Activated T-helper 1 cell treated with anti-CD3 and anti-CD28 coated beads, Interleukin-12 subunit alpha, Interleukin-12 subunit beta, Interleukin-2, Interleukin-4 antibody, amounts not matched to agents 30 ng/mL and 10 ng/mL and 1 ng/mL, durations not matched to agents 14 hours and 24 hours and 36 hours (primary cell): ENCODE measurements at regions of chr12 and their contacts with region 1.

Region 1: DNA sequence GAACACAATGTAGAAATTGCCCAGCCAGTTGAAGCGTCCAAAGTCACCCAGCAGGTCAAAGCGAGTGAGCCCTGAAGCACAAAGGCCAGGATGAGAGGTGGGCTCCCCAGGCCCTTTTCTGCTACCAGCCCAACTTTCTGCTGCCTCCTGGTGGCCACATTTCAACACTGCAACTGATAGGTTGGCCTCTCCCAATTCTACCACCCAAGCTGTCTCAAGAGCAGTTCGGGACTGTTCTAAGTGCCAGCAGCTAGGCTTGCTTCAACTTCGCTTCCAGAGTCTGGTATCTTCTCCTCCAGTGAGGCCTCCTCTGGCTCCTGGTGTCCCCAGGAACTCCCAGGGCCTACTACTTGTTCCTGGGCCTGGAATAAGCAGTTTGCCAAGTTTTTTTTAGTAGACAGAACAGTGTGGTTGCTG is 3.4 kb upstream of the DHH start:
- DNase-seq: peak; percentile 43
- H3K4me3 Mint-ChIP-seq: no peak overlapping the region
- H3K27ac Mint-ChIP-seq: no peak overlapping the region
- H3K4me1 Mint-ChIP-seq: peaks cover 18% of the 10 kb centered on the region
- H3K27me3 Mint-ChIP-seq: peaks cover 20% of the 10 kb centered on the region

Region 2: DNA sequence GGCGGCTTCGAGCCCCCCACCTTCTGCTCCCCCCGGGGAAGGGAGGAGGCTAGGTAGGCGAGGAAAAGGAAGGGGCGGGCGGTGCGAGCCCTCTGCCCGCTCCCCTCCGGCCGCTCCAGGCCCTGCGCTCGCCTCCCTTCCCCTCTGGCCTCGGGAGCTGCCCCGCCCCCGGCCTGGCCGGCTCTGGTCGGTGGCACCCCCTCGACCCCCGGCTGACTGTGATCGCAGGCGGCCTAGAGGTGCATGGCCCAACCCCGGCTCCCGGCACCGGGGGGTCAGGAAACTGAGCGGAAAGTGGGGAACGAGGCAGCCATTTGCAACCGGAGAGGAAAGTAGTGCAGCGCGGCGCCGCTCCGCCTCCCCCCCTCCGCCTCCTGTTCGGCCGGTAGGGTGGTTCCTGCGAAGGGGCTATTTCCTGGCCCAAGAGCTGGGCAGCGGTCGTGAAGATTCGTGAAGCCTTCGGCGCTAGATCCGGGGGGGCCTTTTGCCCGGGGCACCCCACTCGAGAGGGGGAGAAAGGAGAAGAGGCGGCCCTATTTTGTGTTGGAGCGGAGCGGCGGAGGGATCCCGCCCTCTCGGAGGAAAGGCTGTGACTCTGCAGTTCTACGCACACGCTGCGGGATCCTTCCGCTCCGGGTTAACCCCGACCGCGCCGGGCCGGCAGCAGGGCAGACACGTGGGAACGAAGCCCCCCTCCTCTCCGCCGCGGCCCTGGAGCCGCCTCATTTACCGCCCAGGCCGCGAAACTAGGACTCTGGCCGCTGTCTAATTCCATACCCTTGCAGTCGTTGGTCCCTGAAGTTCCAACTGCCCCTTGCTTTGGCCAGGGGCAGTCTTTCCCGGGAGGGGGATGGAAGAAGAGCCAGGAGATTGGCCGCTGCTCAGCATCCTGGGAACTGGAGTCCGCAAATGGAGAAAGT is 37.5 kb before region 1 on chr12 and contains the start of gene KMT2D:
- intact Hi-C with region 1: loop called (anchors 1 kb)
- DNase-seq: peak; percentile 83
- H3K4me3 Mint-ChIP-seq: peak within 1 kb of the TSS; percentile 95
- H3K27ac Mint-ChIP-seq: peak within 1 kb of the TSS; percentile 95
- H3K4me1 Mint-ChIP-seq: peaks cover 48% of the 10 kb centered on the region
- H3K27me3 Mint-ChIP-seq: no peaks in the 10 kb centered on the region
- total RNA-seq, gene KMT2D: 107 and 109 TPM in 2 replicates